Activated naive CD4-positive, alpha-beta T cell treated with anti-CD3 and anti-CD28 coated beads for 36 hours (primary cell): ENCODE measurements at regions of chr3 and their contacts with region 1.

Region 1: GRCh38 chr3:119463171-119464169 is at the start of gene TMEM39A:
- DNase-seq: peak; percentile 98
- H3K4me3 Mint-ChIP-seq: peak within 1 kb of the TSS; percentile 96
- H3K27ac Mint-ChIP-seq: peak within 1 kb of the TSS; percentile 90
- H3K4me1 Mint-ChIP-seq: peaks cover 32% of the 10 kb centered on the region
- H3K27me3 Mint-ChIP-seq: no peaks in the 10 kb centered on the region
- total RNA-seq, gene TMEM39A: 21.4 to 26.9 TPM

Region 2: DNA sequence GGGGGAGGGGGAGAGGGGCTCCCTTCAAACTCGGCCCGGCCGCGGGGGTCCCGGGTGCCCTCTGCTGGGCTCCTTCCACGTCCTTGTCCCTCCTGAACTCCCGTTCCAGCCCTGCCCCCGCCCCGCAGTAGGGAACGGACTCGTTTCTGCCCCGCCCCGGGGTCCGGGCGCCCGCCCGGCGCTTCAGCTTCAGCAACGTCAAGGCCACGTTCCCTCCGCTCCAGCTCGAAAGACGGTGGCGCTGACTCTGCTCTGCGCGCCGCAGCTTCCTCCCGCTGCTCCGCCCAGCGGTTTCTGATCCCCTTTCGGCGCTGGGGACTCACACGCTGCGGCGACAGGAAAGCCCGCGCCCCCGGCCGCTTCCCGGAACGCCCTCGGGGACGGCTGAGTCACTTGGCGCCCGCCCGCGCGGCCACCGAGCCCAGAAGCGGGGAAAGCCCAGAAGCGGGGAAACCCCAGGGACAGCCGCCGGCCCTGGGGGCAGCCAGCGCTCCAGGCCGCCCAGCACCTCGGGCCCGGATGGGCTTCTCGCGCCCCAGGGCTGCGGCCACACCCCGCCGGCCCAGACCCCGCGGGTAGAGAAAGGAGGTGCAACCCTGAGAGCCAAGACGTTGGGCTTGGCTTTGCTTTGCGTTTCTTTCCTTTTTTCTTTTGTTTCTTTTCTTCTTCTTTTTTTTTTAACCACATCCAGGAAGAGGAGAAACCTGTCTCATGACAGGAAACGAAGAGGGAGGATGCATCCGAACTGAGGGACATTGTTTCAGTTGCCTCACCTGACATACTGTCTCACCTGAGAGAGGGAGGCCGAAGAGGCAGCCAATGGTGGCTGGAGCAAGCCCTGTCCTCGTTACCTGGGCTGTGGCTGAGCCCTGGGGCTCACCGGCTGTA is 140.4 kb before region 1 on chr3:
- CTCF ChIA-PET with region 1: no interaction called
- intact Hi-C with region 1: loop called (anchors 1 kb)
- DNase-seq: peak; percentile 96
- H3K4me3 Mint-ChIP-seq: peak overlapping the region; percentile 83
- H3K27ac Mint-ChIP-seq: peak overlapping the region; percentile 94
- H3K4me1 Mint-ChIP-seq: peaks cover 47% of the 10 kb centered on the region
- H3K27me3 Mint-ChIP-seq: no peaks in the 10 kb centered on the region

Region 3: DNA sequence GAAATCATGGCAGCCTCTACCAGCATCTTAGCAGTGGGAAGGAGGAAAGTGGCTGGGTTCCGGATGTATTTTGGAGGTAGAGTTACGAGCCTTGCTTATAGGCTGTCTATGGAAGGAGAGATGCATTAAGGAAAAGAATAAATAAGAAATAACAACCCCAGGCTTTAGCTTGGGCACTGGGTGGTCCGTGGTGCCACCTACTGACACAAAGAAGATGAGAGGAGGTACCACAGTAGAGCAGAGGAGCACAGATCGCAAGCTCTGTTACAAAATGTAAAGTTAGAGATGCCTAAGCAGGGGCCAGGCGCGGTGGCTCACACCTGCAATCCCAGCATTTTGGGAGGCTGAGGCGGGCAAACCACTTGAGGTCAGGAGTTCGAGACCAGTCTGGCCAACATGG is 74.9 kb before region 1 on chr3:
- CTCF ChIA-PET with region 1: no interaction called
- intact Hi-C with region 1: no loop called
- DNase-seq: no peak
- H3K4me3 Mint-ChIP-seq: no peak overlapping the region
- H3K27ac Mint-ChIP-seq: no peak overlapping the region
- H3K4me1 Mint-ChIP-seq: no peaks in the 10 kb centered on the region
- H3K27me3 Mint-ChIP-seq: no peaks in the 10 kb centered on the region

Region 4: GRCh38 chr3:119498186-119498987 is 34.9 kb after region 1 on chr3 and contains the start of gene TIMMDC1:
- CTCF ChIA-PET with region 1: interaction called, 9 read pairs
- intact Hi-C with region 1: loop called (anchors 1 kb)
- DNase-seq: peak; percentile 98
- H3K4me3 Mint-ChIP-seq: peak within 1 kb of the TSS; percentile 99
- H3K27ac Mint-ChIP-seq: peak within 1 kb of the TSS; percentile 94
- H3K4me1 Mint-ChIP-seq: peaks cover 37% of the 10 kb centered on the region
- H3K27me3 Mint-ChIP-seq: no peaks in the 10 kb centered on the region
- total RNA-seq, gene TIMMDC1: 75.6 to 83.8 TPM

Region 5: GRCh38 chr3:119579366-119580165 is 116.1 kb after region 1 on chr3 and contains the start of gene ADPRH:
- CTCF ChIA-PET with region 1: no interaction called
- intact Hi-C with region 1: loop called (anchors 1 kb)
- DNase-seq: peak; percentile 66
- H3K4me3 Mint-ChIP-seq: peak within 1 kb of the TSS; percentile 86
- H3K27ac Mint-ChIP-seq: peak within 1 kb of the TSS; percentile 54
- H3K4me1 Mint-ChIP-seq: peaks cover 15% of the 10 kb centered on the region
- H3K27me3 Mint-ChIP-seq: peaks cover 18% of the 10 kb centered on the region
- total RNA-seq, gene ADPRH: 2.6 to 3.1 TPM

Region 6: DNA sequence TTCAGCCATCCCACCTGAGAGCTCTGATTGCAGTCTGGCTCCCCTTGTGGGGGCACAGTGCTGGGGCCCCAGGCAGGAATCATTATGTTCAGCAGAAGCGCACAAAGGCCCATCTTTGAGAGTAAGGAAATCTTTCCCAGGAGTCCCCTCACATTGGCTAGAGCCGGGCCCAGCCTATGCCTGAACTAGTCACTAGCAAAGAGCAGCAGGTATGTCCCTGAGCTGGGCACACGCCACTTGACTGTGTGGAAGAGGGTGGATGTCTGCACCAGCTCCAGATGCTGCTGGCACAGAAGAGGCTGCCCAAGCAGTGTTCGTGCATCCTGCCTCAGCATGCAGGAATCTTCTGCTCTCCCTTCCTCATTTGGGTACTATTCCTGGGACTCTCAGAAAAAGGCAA is 344.8 kb after region 1 on chr3:
- CTCF ChIA-PET with region 1: no interaction called
- intact Hi-C with region 1: no loop called
- DNase-seq: no peak
- H3K4me3 Mint-ChIP-seq: no peak overlapping the region
- H3K27ac Mint-ChIP-seq: no peak overlapping the region
- H3K4me1 Mint-ChIP-seq: peaks cover 10% of the 10 kb centered on the region
- H3K27me3 Mint-ChIP-seq: no peaks in the 10 kb centered on the region

Region 7: GRCh38 chr3:119973289-119973688 is 509.8 kb after region 1 on chr3:
- CTCF ChIA-PET with region 1: no interaction called
- intact Hi-C with region 1: no loop called
- DNase-seq: no peak
- H3K4me3 Mint-ChIP-seq: no peak overlapping the region
- H3K27ac Mint-ChIP-seq: no peak overlapping the region
- H3K4me1 Mint-ChIP-seq: peaks cover 36% of the 10 kb centered on the region
- H3K27me3 Mint-ChIP-seq: no peaks in the 10 kb centered on the region

Region 8: GRCh38 chr3:120742198-120742849 is 1278.9 kb after region 1 on chr3 and contains the starts of genes GTF2E1 and RABL3:
- CTCF ChIA-PET with region 1: no interaction called
- intact Hi-C with region 1: loop called (anchors 10 kb)
- DNase-seq: peak; percentile 98
- H3K4me3 Mint-ChIP-seq: peak within 1 kb of the TSS; percentile 90
- H3K27ac Mint-ChIP-seq: peak within 1 kb of the TSS; percentile 96
- H3K4me1 Mint-ChIP-seq: peaks cover 33% of the 10 kb centered on the region
- H3K27me3 Mint-ChIP-seq: no peaks in the 10 kb centered on the region
- total RNA-seq, gene GTF2E1: 13.2 TPM
- total RNA-seq, gene RABL3: 34.7 to 36.8 TPM